ENCODE measurements at regions of chr11 and their contacts with region 1.

Region 1: DNA sequence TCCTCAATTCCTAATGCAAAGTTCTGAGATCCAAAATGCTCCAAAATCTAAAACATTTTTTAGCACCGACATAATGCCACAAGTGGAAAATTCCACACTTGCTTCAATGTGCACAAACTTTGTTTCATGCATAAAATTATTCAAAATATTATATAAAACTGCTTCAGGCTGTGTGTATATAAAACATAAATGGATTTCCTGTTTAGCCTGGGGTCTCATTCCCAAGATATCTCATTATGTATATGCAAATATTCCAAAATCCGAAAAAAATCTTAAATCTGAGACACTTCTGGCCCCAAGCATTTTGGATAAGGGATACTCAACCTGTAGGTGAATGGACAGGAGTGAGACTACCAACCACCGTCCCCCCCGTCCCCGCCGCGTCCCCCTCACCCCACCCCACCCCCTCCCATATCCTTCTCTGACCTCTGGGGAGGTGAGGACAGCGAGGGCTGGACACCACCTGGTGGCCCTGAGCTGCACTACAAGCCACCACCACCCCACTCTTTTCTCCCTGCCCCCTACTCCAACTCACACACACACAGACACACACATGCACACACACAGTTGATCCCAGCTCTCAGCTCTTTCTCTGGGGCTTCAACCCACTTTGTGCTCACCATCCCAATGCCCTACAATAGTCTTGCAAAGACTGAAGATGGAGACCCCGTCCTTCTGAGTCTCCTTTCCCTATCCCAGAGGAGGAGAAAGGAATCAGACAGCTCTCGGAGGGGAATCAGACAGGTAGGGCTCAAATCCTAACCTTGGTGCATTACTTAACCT is 101.0 kb downstream of the PDE2A start:
- DNase-seq: peak in 3 of 10 donors; percentile 30 to 84 (median 39)

Region 2: DNA sequence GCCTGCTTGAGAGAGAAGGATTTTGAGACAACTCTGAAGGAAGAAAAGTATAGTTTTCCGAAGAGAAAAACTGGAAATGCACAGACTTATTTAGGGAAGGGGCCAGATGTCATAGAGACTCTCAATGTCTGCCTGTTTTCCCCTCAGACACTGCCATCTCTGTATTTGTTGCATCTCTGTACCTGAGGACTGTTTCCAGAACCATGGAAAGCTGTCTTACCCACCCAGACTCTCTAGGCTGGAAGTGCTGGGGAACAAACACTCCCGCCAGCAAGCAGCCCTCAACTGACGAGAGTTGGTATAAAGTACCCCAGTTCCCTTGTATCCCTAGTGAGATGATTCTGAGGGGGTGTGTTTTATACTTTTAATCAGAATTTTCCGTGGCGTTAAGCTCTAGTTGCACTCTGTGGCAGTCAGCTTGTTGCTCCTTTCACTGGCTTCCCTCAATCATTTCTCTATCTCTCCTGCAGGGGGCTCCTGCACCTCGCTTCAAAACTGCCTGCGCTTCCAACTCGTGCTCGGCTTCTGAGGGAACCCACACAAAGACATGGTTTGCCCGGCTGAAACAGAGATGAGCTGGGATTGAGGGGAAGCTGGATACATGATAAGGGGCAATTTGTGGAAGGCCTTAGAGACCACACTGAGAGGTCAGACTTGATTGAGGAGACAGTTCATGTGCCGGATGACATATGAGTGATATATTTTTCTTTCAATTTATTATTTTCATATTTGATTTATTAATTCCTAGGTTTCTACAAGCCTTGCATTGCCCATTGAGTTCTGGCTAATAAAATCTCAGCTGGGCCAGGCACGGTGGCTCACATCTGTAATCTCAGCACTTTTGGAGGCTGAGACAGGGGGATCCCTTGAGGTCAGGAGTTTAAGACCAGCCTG is 102.0 kb before region 1 on chr11:
- intact Hi-C with region 1: loop called (anchors 1 kb)
- DNase-seq: peak; percentile 58 to 96 (median 72)

Region 3: DNA sequence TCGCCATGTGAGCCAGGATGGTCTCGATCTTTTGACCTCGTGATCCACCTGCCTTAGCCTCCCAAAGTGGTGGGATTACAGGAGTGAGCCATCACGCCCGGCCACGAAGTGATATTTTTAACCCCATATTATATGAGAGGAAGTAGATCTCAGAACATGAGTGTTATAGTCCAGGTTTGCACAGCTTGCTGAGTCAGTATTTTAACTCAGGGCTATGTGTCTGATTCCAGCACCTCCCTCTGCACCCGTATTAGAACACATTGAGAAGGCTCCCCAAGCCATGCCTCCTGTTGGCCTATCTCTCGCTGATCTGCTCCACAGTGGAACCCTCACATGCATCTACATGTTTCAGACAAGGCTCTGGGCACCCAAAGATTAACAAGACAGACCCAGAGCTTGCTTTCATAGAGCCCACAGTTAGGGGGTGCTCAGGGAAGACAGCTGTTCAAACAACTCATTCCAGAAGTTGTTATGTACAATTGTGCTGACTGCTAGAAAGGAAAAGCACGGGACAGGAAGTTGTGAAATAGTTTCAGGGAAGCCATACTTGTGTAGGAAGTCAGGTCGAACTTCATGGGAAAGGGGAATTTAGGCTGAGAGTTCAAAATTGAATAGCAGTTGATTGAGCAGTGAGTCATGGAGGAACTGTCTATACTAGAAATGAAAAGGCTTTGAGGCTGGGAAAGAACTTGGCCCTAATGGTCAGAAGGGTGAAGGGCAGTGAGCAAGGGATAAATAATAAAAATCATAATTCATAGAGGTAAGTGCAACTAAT is 89.7 kb before region 1 on chr11:
- intact Hi-C with region 1: loop called (anchors 1 kb)
- DNase-seq: no peak